Activated naive CD4-positive, alpha-beta T cell treated with anti-CD3 and anti-CD28 coated beads for 36 hours (primary cell): ENCODE measurements at regions of chrX and their contacts with region 1.

Region 1: GRCh38 chrX:135985141-135985972 is at the start of gene SLC9A6:
- DNase-seq: peak; percentile 63
- H3K4me3 Mint-ChIP-seq: peak within 1 kb of the TSS; percentile 85
- H3K27ac Mint-ChIP-seq: peak within 1 kb of the TSS; percentile 77
- H3K4me1 Mint-ChIP-seq: peaks cover 50% of the 10 kb centered on the region
- H3K27me3 Mint-ChIP-seq: no peaks in the 10 kb centered on the region
- total RNA-seq, gene SLC9A6: 9.7 to 10.0 TPM

Region 2: DNA sequence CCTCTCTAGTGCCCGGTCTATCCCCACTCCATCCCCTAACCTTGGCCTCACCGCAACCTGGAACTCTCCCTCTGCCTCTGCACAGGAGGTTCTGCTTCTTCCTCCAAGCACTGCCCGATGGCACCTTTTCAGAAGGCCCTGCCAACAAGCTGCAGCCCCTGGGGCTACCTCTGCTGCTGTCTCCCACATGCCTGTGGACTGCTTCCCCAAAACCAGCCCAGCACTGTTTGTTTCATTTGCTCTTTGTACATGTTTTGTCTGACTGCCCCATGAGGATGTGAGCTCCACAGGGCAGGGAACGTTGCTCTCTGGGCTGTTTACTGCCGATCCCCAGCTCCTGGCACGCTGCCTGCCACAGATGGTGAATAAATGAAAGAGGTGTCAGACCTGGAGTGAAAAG is 379.5 kb before region 1 on chrX:
- CTCF ChIA-PET with region 1: no interaction called
- intact Hi-C with region 1: no loop called
- DNase-seq: no peak
- H3K4me3 Mint-ChIP-seq: no peak overlapping the region
- H3K27ac Mint-ChIP-seq: no peak overlapping the region
- H3K4me1 Mint-ChIP-seq: no peaks in the 10 kb centered on the region
- H3K27me3 Mint-ChIP-seq: peaks cover 6% of the 10 kb centered on the region

Region 3: DNA sequence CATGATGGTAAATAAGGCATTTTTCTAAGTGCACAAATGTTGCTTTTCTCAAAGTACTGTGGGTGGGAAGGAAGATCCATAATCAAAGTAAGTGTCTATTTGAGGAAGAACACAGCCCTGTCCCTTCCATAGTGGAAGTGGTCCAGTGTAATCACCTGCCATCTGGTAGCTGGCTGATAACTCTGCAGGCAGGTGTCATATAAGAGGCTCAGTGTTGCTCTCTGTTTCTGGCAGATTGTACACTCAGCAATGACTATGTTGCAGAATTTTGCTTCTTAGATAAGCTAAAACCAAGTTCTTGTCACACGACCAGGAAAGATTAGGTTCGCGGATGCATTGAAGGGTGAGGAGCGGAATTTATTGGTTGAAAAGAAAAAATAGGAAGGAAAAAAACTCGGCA is 71.0 kb before region 1 on chrX:
- CTCF ChIA-PET with region 1: no interaction called
- intact Hi-C with region 1: no loop called
- DNase-seq: no peak
- H3K4me3 Mint-ChIP-seq: no peak overlapping the region
- H3K27ac Mint-ChIP-seq: no peak overlapping the region
- H3K4me1 Mint-ChIP-seq: no peaks in the 10 kb centered on the region
- H3K27me3 Mint-ChIP-seq: no peaks in the 10 kb centered on the region

Region 4: GRCh38 chrX:135931644-135932487 is 53.5 kb before region 1 on chrX:
- CTCF ChIA-PET with region 1: no interaction called
- intact Hi-C with region 1: no loop called
- DNase-seq: peak; percentile 57
- H3K4me3 Mint-ChIP-seq: no peak overlapping the region
- H3K27ac Mint-ChIP-seq: no peak overlapping the region
- H3K4me1 Mint-ChIP-seq: no peaks in the 10 kb centered on the region
- H3K27me3 Mint-ChIP-seq: no peaks in the 10 kb centered on the region

Region 5: DNA sequence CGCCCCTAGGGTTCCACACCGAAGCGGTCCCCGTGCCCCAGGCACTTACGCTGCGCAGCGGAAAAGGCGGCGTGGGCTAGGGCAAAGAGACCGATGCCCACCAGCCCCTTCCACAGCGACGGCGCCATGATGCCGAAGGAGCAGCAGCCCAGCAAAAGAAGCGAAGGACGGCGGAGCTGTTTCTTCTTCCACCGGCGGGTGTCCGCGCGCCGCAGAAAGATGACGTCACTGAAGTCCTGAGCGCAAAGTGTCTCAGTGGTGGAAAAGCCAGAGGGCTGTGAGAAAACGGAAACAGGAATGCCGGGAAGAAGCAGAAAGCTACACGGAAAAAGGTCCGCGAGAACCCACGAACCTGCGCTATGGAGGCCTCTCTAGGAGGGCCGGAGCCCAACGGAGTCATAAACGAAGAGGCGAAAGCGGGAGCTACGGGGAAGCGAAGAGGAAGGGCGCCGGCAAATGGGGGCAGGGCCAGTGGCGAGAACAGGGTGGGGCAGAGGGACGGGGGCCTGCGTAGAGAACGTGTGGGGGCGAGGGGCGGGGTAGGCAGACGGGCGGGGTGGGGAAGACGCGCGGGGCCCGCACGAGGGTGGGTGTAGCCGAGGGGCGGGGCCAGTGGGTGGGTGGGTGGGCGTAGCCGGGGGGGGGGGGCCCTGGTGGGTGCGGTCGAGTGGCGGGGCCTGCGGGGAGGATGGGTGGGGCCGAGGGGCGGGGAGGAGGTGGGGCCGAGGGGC is 11.6 kb before region 1 on chrX and contains the start of gene MMGT1:
- CTCF ChIA-PET with region 1: interaction called, 4 read pairs
- intact Hi-C with region 1: loop called (anchors 1 kb)
- DNase-seq: peak; percentile 84
- H3K4me3 Mint-ChIP-seq: peak within 1 kb of the TSS; percentile 95
- H3K27ac Mint-ChIP-seq: peak within 1 kb of the TSS; percentile 92
- H3K4me1 Mint-ChIP-seq: peaks cover 23% of the 10 kb centered on the region
- H3K27me3 Mint-ChIP-seq: no peaks in the 10 kb centered on the region
- total RNA-seq, gene MMGT1: 17.0 to 17.1 TPM

Region 6: GRCh38 chrX:136251041-136251991 is 266.0 kb after region 1 on chrX and contains the start of gene MAP7D3:
- CTCF ChIA-PET with region 1: no interaction called
- intact Hi-C with region 1: loop called (anchors 5 kb)
- DNase-seq: peak; percentile 66
- H3K4me3 Mint-ChIP-seq: peak within 1 kb of the TSS; percentile 83
- H3K27ac Mint-ChIP-seq: peak within 1 kb of the TSS; percentile 56
- H3K4me1 Mint-ChIP-seq: peaks cover 12% of the 10 kb centered on the region
- H3K27me3 Mint-ChIP-seq: no peaks in the 10 kb centered on the region
- total RNA-seq, gene MAP7D3: 10.4 to 12.5 TPM

Region 7: GRCh38 chrX:136725446-136726104 is 740.2 kb after region 1 on chrX:
- CTCF ChIA-PET with region 1: no interaction called
- intact Hi-C with region 1: no loop called
- DNase-seq: no peak
- H3K4me3 Mint-ChIP-seq: no peak overlapping the region
- H3K27ac Mint-ChIP-seq: no peak overlapping the region
- H3K4me1 Mint-ChIP-seq: peaks cover 44% of the 10 kb centered on the region
- H3K27me3 Mint-ChIP-seq: no peaks in the 10 kb centered on the region